CD4-positive, alpha-beta memory T cell (primary cell): ENCODE measurements at regions of chr12 and their contacts with region 1.

Region 1: GRCh38 chr12:122051231-122051876 is 27.2 kb upstream of the MLXIP start:
- DNase-seq: no peak
- H3K4me3 ChIP-seq: no peak overlapping the region
- H3K4me3 Mint-ChIP-seq: no peak overlapping the region
- H3K27ac ChIP-seq: no peak overlapping the region
- H3K27ac Mint-ChIP-seq: no peak overlapping the region
- H3K4me1 ChIP-seq: peaks cover 4% of the 10 kb centered on the region
- H3K4me1 Mint-ChIP-seq: peaks cover 0 to 7% (median 5%) of the 10 kb centered on the region in 4 donors
- H3K27me3 ChIP-seq: no peaks in the 10 kb centered on the region
- H3K27me3 Mint-ChIP-seq: no peaks in the 10 kb centered on the region

Region 2: GRCh38 chr12:122078141-122079032 is 27.0 kb after region 1 on chr12 and contains the start of gene MLXIP:
- CTCF ChIA-PET with region 1: interaction called, 26 read pairs
- POLR2A ChIA-PET with region 1: interaction called, 6 read pairs
- intact Hi-C with region 1: loop called (anchors 1 kb)
- DNase-seq: peak; percentile 83 to 87 (median 85)
- H3K4me3 ChIP-seq: peak within 1 kb of the TSS; percentile 82 to 92
- H3K4me3 Mint-ChIP-seq: peak within 1 kb of the TSS; percentile 84 to 98 (median 95)
- H3K27ac ChIP-seq: peak within 1 kb of the TSS; percentile 69
- H3K27ac Mint-ChIP-seq: peak within 1 kb of the TSS; percentile 77 to 99 (median 95)
- H3K4me1 ChIP-seq: peaks cover 54% of the 10 kb centered on the region
- H3K4me1 Mint-ChIP-seq: peaks cover 26 to 46% (median 35%) of the 10 kb centered on the region in 4 donors
- H3K27me3 ChIP-seq: no peaks in the 10 kb centered on the region
- H3K27me3 Mint-ChIP-seq: no peaks in the 10 kb centered on the region
- total RNA-seq, gene MLXIP: 79.5 to 88.1 TPM

Region 3: GRCh38 chr12:122090759-122091515 is 39.6 kb after region 1 on chr12:
- CTCF ChIA-PET with region 1: interaction called, 14 read pairs
- POLR2A ChIA-PET with region 1: no interaction called
- intact Hi-C with region 1: no loop called
- DNase-seq: no peak
- H3K4me3 ChIP-seq: no peak overlapping the region
- H3K4me3 Mint-ChIP-seq: peak overlapping the region in 3 of 8 donors; percentile 14 to 57 (median 55)
- H3K27ac ChIP-seq: no peak overlapping the region
- H3K27ac Mint-ChIP-seq: peak overlapping the region in 6 of 7 donors; percentile 1 to 85 (median 80)
- H3K4me1 ChIP-seq: peaks cover 84% of the 10 kb centered on the region
- H3K4me1 Mint-ChIP-seq: peaks cover 27 to 45% (median 37%) of the 10 kb centered on the region in 4 donors
- H3K27me3 ChIP-seq: no peaks in the 10 kb centered on the region
- H3K27me3 Mint-ChIP-seq: no peaks in the 10 kb centered on the region

Region 4: GRCh38 chr12:122190842-122191668 is 139.7 kb after region 1 on chr12:
- CTCF ChIA-PET with region 1: interaction called, 14 read pairs
- POLR2A ChIA-PET with region 1: no interaction called
- intact Hi-C with region 1: loop called (anchors 1 kb)
- DNase-seq: peak; percentile 45 to 60 (median 59)
- H3K4me3 ChIP-seq: no peak overlapping the region
- H3K4me3 Mint-ChIP-seq: no peak overlapping the region
- H3K27ac ChIP-seq: no peak overlapping the region
- H3K27ac Mint-ChIP-seq: no peak overlapping the region
- H3K4me1 ChIP-seq: no peaks in the 10 kb centered on the region
- H3K4me1 Mint-ChIP-seq: peaks cover 0 to 4% (median under 1%) of the 10 kb centered on the region in 4 donors
- H3K27me3 ChIP-seq: no peaks in the 10 kb centered on the region
- H3K27me3 Mint-ChIP-seq: peaks cover 2% of the 10 kb centered on the region in 2 donors

Region 5: GRCh38 chr12:122265931-122266771 is 214.8 kb after region 1 on chr12 and contains the start of gene VPS33A:
- CTCF ChIA-PET with region 1: interaction called, 6 read pairs
- POLR2A ChIA-PET with region 1: no interaction called
- intact Hi-C with region 1: loop called (anchors 1 kb)
- DNase-seq: peak; percentile 88 to 93 (median 91)
- H3K4me3 ChIP-seq: peak within 1 kb of the TSS; percentile 70 to 99
- H3K4me3 Mint-ChIP-seq: peak within 1 kb of the TSS; percentile 96 to 99 (median 98)
- H3K27ac ChIP-seq: peak within 1 kb of the TSS; percentile 81
- H3K27ac Mint-ChIP-seq: peak within 1 kb of the TSS; percentile 99 to 100 (median 99)
- H3K4me1 ChIP-seq: peaks cover 23% of the 10 kb centered on the region
- H3K4me1 Mint-ChIP-seq: peaks cover 14 to 39% (median 25%) of the 10 kb centered on the region in 4 donors
- H3K27me3 ChIP-seq: no peaks in the 10 kb centered on the region
- H3K27me3 Mint-ChIP-seq: peaks cover 0 to 4% of the 10 kb centered on the region in 2 donors
- total RNA-seq, gene VPS33A: 40.5 to 42.6 TPM

Region 6: GRCh38 chr12:122356192-122356635 is 304.9 kb after region 1 on chr12:
- CTCF ChIA-PET with region 1: interaction called, 10 read pairs
- POLR2A ChIA-PET with region 1: no interaction called
- intact Hi-C with region 1: loop called (anchors 1 kb)
- DNase-seq: peak in 4 of 5 donors; percentile 38 to 54 (median 44)
- H3K4me3 ChIP-seq: no peak overlapping the region
- H3K4me3 Mint-ChIP-seq: no peak overlapping the region
- H3K27ac ChIP-seq: no peak overlapping the region
- H3K27ac Mint-ChIP-seq: peak overlapping the region in 4 of 7 donors; percentile 5 to 87 (median 36)
- H3K4me1 ChIP-seq: no peaks in the 10 kb centered on the region
- H3K4me1 Mint-ChIP-seq: peaks cover 0 to 6% (median 3%) of the 10 kb centered on the region in 4 donors
- H3K27me3 ChIP-seq: no peaks in the 10 kb centered on the region
- H3K27me3 Mint-ChIP-seq: no peaks in the 10 kb centered on the region